Left colon (tissue), 2 donors: ENCODE measurements at regions of chr10 and their contacts with region 1.

Region 1: GRCh38 chr10:104209575-104210198 is 22.5 kb downstream of the CFAP43 start:
- DNase-seq: peak in 1 of 2 donors; percentile 28
- ATAC-seq: peak; percentile 64

Region 2: GRCh38 chr10:103888113-103888841 is 321.4 kb before region 1 on chr10:
- intact Hi-C with region 1: loop called in 1 of 2 experiments (anchors 10 kb)
- DNase-seq: peak; percentile 92
- ATAC-seq: peak; percentile 68